ENCODE measurements at regions of chrX and their contacts with region 1.

Region 1: GRCh38 chrX:10119399-10119990 is 37.3 kb upstream of the CLCN4 start:
- DNase-seq: peak; percentile 80
- H3K4me3 Mint-ChIP-seq: no peak overlapping the region
- H3K27ac Mint-ChIP-seq: no peak overlapping the region
- H3K4me1 Mint-ChIP-seq: no peaks in the 10 kb centered on the region
- H3K27me3 Mint-ChIP-seq: no peaks in the 10 kb centered on the region
- CTCF ChIP-seq: peak; percentile 100

Region 2: DNA sequence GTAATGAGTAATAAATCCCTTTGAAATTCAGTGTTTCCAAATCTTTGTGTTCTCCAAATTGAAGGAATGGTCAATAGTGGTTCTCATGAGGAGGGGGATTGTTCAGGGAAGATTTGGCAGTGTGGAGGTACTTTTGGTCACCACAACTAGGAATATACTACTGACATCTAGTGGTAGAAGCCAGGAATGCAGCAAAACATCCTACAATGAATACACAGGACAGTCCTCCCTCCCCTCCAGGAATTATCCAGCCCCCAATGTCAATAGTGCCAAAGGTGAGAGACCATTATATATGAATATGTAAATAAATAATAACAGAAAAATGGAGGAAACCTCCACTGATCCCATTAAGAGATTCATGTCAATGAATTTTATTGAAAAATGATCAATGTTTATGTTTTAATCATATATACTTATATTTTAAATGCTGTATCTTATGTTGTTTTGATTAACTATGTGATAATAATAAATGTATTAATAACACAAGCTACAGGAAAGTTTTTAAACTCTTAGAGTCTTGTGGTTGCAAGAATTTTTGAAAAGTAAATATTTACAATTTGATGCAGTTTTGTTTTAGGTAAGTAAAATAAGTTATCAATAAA is 1303.9 kb before region 1 on chrX:
- CTCF ChIA-PET with region 1: interaction called, 4 read pairs
- POLR2A ChIA-PET with region 1: no interaction called
- intact Hi-C with region 1: loop called (anchors 5 kb)
- DNase-seq: peak; percentile 71
- H3K4me3 Mint-ChIP-seq: no peak overlapping the region
- H3K27ac Mint-ChIP-seq: no peak overlapping the region
- H3K4me1 Mint-ChIP-seq: no peaks in the 10 kb centered on the region
- H3K27me3 Mint-ChIP-seq: peaks cover 16% of the 10 kb centered on the region
- CTCF ChIP-seq: peak; percentile 59

Region 3: GRCh38 chrX:9897761-9898161 is 221.7 kb before region 1 on chrX:
- CTCF ChIA-PET with region 1: interaction called, 14 read pairs
- POLR2A ChIA-PET with region 1: no interaction called
- intact Hi-C with region 1: no loop called
- DNase-seq: peak; percentile 34
- H3K4me3 Mint-ChIP-seq: no peak overlapping the region
- H3K27ac Mint-ChIP-seq: no peak overlapping the region
- H3K4me1 Mint-ChIP-seq: peaks cover 9% of the 10 kb centered on the region
- H3K27me3 Mint-ChIP-seq: no peaks in the 10 kb centered on the region
- CTCF ChIP-seq: no peak

Region 4: GRCh38 chrX:9995855-9996339 is 123.6 kb before region 1 on chrX:
- CTCF ChIA-PET with region 1: interaction called, 178 read pairs
- POLR2A ChIA-PET with region 1: interaction called, 3 read pairs
- intact Hi-C with region 1: loop called (anchors 1 kb)
- DNase-seq: peak; percentile 85
- H3K4me3 Mint-ChIP-seq: no peak overlapping the region
- H3K27ac Mint-ChIP-seq: no peak overlapping the region
- H3K4me1 Mint-ChIP-seq: no peaks in the 10 kb centered on the region
- H3K27me3 Mint-ChIP-seq: no peaks in the 10 kb centered on the region
- CTCF ChIP-seq: peak; percentile 96

Region 5: DNA sequence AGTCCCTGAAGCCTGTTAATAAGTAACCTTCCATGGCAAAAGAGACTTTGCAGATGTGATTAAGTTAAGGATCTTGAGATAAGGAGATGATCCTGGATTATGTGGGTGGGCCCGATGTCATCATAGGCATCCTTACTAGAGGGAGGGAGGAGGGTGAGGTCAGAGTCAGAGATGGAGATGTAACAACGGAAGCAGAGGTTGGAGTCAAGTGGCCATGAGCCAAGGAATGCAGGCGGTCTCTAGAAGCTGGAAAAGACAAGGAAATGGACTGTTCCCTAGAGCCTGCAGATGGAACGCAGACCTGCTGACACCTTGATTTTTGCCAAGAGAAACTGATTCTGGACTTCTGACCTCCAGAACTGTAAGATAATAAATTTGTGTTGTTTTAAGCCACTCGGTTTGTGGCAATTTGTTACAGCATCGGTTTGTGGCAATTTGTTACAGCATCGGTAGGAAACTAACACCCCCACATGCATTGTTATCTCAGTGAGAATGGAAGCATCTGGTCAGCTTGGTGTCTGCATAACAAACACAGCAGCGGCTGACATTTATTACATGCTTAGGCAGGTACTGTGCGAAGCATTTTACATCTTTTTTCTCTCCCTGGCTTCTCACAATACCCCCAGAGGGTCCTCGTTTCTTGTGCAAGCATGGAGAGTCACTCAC is 96.8 kb before region 1 on chrX:
- CTCF ChIA-PET with region 1: interaction called, 13 read pairs
- POLR2A ChIA-PET with region 1: interaction called, 3 read pairs
- intact Hi-C with region 1: no loop called
- DNase-seq: peak; percentile 73
- H3K4me3 Mint-ChIP-seq: no peak overlapping the region
- H3K27ac Mint-ChIP-seq: no peak overlapping the region
- H3K4me1 Mint-ChIP-seq: peaks cover 24% of the 10 kb centered on the region
- H3K27me3 Mint-ChIP-seq: no peaks in the 10 kb centered on the region
- CTCF ChIP-seq: no peak

Region 6: GRCh38 chrX:10133980-10134676 is 14.6 kb after region 1 on chrX:
- CTCF ChIA-PET with region 1: interaction called, 18 read pairs
- POLR2A ChIA-PET with region 1: no interaction called
- intact Hi-C with region 1: no loop called
- DNase-seq: no peak
- H3K4me3 Mint-ChIP-seq: no peak overlapping the region
- H3K27ac Mint-ChIP-seq: no peak overlapping the region
- H3K4me1 Mint-ChIP-seq: no peaks in the 10 kb centered on the region
- H3K27me3 Mint-ChIP-seq: no peaks in the 10 kb centered on the region
- CTCF ChIP-seq: no peak

Region 7: GRCh38 chrX:10512258-10512657 is 392.8 kb after region 1 on chrX:
- CTCF ChIA-PET with region 1: no interaction called
- POLR2A ChIA-PET with region 1: no interaction called
- intact Hi-C with region 1: no loop called
- DNase-seq: peak; percentile 48
- H3K4me3 Mint-ChIP-seq: no peak overlapping the region
- H3K27ac Mint-ChIP-seq: no peak overlapping the region
- H3K4me1 Mint-ChIP-seq: peaks cover 14% of the 10 kb centered on the region
- H3K27me3 Mint-ChIP-seq: no peaks in the 10 kb centered on the region
- CTCF ChIP-seq: no peak